Activated CD4-positive, alpha-beta T cell treated with anti-CD3 and anti-CD28 coated beads, Interleukin-2, amount 10 ng/mL, durations not matched to agents 7 days and 5 days (primary cell): ENCODE measurements at regions of chr4 and their contacts with region 1.

Region 1: GRCh38 chr4:25367004-25367621 is 9.9 kb upstream of the ANAPC4 start:
- DNase-seq: peak; percentile 21
- H3K4me3 Mint-ChIP-seq: no peak overlapping the region
- H3K27ac Mint-ChIP-seq: no peak overlapping the region
- H3K4me1 Mint-ChIP-seq: no peaks in the 10 kb centered on the region
- H3K27me3 Mint-ChIP-seq: no peaks in the 10 kb centered on the region

Region 2: DNA sequence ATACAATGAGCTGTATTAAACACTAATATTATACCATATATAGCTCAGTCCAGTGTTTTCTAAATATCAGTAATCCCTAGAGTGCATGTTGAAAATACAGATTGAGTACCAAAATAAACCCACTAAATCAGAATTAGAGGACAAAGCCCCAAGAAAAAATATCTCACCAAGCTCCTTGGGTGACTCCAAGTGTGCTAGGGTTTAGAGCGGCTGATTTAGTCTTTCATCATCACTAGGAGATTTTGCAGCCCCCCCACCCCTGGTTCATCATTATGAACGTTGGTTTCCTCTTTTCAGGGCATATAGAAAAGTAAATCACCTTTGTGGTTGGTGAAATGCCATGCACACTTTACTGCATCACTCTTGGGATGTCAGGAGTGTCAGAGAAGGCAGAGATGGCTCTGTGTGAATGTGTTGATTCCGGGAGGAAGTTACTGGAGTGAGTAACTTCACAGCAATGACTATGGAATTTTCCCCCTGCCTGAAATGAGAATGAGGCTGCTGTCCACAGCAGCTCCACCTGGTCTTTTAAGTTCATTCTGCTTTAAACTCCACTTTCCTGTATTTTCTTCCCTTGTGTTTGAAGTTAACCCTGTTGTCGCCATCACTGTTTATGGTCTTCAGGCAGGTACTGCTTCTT is 15.2 kb before region 1 on chr4:
- CTCF ChIA-PET with region 1: interaction called, 10 read pairs
- POLR2A ChIA-PET with region 1: no interaction called
- DNase-seq: no peak
- H3K4me3 Mint-ChIP-seq: no peak overlapping the region
- H3K27ac Mint-ChIP-seq: no peak overlapping the region
- H3K4me1 Mint-ChIP-seq: peaks cover under 1% of the 10 kb centered on the region
- H3K27me3 Mint-ChIP-seq: no peaks in the 10 kb centered on the region